ENCODE measurements at regions of chr4 and their contacts with region 1.

Region 1: GRCh38 chr4:107736924-107737448 is 17.0 kb upstream of the PAPSS1 start:
- DNase-seq: peak; percentile 69
- ATAC-seq: peak; percentile 90
- H3K4me3 ChIP-seq: peak overlapping the region in 1 of 3 experiments; percentile 31; a peak in 1 of 6 replicates
- H3K27ac ChIP-seq: peak overlapping the region; percentile 66
- H3K4me1 ChIP-seq: peaks cover 41% of the 10 kb centered on the region
- H3K27me3 ChIP-seq: no peaks in the 10 kb centered on the region; a peak in 1 of 5 replicates
- CTCF ChIP-seq: peak; percentile 94
- EP300 ChIP-seq: peak in 1 of 2 experiments; percentile 59; a peak in 1 of 4 replicates
- POLR2A ChIP-seq: no peak
- RAD21 ChIP-seq: peak; percentile 86

Region 2: DNA sequence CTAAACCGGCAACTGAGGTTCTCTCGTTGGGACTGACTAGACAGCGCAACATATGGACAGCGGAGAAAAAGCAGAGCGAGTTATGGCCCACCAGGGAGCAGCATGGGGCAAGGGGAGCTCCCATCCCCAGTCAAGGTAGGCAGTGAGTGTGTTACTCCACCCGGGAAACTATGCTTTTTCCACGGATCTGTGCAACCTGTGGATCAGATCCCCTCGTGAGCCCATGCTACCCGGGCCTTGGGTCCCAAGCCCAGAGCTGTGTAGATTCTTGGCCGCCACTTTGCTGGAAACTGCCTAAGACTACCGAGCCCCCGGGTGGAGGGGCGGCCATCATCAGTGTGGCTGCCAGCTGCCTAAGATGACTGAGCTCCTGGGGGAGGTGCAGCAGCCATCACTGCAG is 157.9 kb before region 1 on chr4:
- CTCF ChIA-PET with region 1: interaction called, 15 read pairs
- POLR2A ChIA-PET with region 1: interaction called, 3 read pairs
- in situ Hi-C with region 1: loop called (anchors 5 kb)
- intact Hi-C with region 1: loop called (anchors 1 kb)
- DNase-seq: peak; percentile 50
- ATAC-seq: peak; percentile 100
- H3K4me3 ChIP-seq: peak overlapping the region; percentile 13 to 62 (median 56); a peak in 4 of 6 replicates
- H3K27ac ChIP-seq: no peak overlapping the region
- H3K4me1 ChIP-seq: no peaks in the 10 kb centered on the region; the same call in 1 of the 2 replicates
- H3K27me3 ChIP-seq: no peaks in the 10 kb centered on the region
- CTCF ChIP-seq: peak; percentile 89
- EP300 ChIP-seq: no peak
- POLR2A ChIP-seq: no peak
- RAD21 ChIP-seq: peak; percentile 83

Region 3: DNA sequence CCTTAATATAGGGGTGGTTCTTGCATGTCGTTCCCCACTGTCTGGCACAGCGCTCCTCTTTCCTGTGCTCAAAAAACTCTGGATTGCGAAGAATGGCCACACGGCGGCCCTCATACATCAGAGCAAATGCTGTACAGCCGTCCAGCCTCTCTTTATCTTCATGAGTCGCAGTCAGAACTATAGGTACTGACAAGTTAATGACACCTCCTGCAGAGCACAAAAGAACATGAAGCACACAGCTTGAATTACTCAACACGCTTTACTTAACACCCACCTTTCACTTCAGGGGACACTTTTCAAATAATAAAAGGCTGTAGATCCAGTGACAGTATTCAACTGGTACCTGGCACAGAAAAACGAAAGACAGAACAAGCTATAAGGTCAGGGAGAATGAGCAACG is 82.3 kb before region 1 on chr4:
- CTCF ChIA-PET with region 1: no interaction called
- POLR2A ChIA-PET with region 1: no interaction called
- in situ Hi-C with region 1: no loop called
- intact Hi-C with region 1: loop called (anchors 5 kb)
- DNase-seq: peak; percentile 6
- ATAC-seq: peak; percentile 45; the same call in 2 of the 3 replicates
- H3K4me3 ChIP-seq: no peak overlapping the region
- H3K27ac ChIP-seq: no peak overlapping the region
- H3K4me1 ChIP-seq: no peaks in the 10 kb centered on the region
- H3K27me3 ChIP-seq: no peaks in the 10 kb centered on the region
- CTCF ChIP-seq: 0 out of 2 replicates have a peak, but pooled peaks have one; percentile 7
- EP300 ChIP-seq: no peak
- POLR2A ChIP-seq: no peak
- RAD21 ChIP-seq: no peak

Region 4: DNA sequence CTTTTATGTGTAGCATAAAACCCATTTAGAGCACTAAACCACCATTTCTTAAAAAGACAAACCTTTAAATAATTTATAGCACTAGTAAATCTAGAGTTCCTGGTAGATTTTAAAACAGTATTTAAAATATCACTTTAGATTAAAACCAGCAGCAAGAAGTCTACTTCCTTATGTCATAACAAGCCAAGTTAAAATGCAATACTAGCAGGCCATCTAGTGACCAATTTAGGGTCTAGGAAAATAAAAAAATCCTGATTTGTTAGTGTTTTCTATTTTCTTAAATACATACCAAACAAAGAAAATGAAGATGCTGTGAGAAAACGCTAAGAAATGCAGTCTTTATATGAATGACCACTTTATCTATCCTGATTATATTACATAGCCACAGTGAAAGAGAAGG is 70.9 kb before region 1 on chr4:
- CTCF ChIA-PET with region 1: no interaction called
- POLR2A ChIA-PET with region 1: no interaction called
- in situ Hi-C with region 1: no loop called
- intact Hi-C with region 1: loop called (anchors 5 kb)
- DNase-seq: peak; percentile 10
- ATAC-seq: no peak
- H3K4me3 ChIP-seq: no peak overlapping the region
- H3K27ac ChIP-seq: no peak overlapping the region
- H3K4me1 ChIP-seq: no peaks in the 10 kb centered on the region
- H3K27me3 ChIP-seq: no peaks in the 10 kb centered on the region
- CTCF ChIP-seq: peak; percentile 46
- EP300 ChIP-seq: no peak
- POLR2A ChIP-seq: no peak
- RAD21 ChIP-seq: no peak

Region 5: GRCh38 chr4:107853444-107854355 is 116.7 kb after region 1 on chr4:
- CTCF ChIA-PET with region 1: no interaction called
- POLR2A ChIA-PET with region 1: no interaction called
- in situ Hi-C with region 1: no loop called
- intact Hi-C with region 1: no loop called
- DNase-seq: no peak
- ATAC-seq: no peak
- H3K4me3 ChIP-seq: no peak overlapping the region
- H3K27ac ChIP-seq: no peak overlapping the region
- H3K4me1 ChIP-seq: no peaks in the 10 kb centered on the region
- H3K27me3 ChIP-seq: no peaks in the 10 kb centered on the region
- CTCF ChIP-seq: no peak
- EP300 ChIP-seq: no peak
- POLR2A ChIP-seq: no peak
- RAD21 ChIP-seq: no peak

Measured in HepG2 (cell line).